ENCODE measurements at regions of chr9 and their contacts with region 1.

Region 1: DNA sequence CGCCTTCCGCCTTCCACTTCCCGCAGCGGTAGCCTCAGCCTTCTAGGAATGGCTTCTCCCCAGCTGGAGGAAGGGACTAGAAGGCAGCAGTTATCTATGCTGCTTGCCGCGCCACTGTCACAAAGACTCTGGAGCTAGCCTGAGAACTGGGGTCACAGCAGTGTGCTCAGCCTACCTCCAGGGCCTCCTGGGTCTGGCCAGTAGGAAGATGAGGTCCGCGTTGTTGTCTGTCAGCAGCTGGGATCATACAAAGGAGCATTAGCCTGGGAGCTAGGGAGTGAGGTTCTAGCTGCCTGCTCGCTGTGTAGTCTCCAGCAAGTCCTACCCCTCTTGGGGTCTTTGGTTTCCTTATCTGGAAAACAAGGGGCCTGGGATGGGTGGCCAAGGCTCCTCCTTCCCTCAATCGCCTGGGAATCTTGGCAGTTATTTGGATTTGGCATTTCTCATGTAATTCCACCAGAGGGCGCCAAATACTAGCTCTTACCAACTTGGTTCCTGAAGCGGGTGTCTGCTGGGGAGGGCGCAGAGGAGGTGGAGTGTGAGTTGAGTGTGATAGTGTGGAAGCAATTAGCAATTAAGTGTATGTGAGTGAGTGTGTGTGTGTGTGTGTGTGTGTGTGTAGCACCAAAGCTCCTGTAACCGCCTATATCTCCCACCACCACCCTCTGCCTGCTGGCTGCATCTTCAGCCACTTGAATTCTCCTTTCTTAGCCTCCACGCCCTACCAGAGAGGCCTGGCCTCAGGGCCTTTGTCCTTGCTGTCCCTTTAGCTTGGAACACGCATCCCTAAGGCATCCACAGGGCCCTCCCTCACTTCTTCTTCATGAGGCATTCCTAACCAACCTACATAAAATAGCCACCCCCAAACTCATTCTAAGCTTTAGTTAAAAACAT is 97.1 kb downstream of the ENTREP1 start:
- DNase-seq: peak; percentile 55
- H3K4me3 ChIP-seq: no peak overlapping the region
- H3K27ac ChIP-seq: no peak overlapping the region
- H3K4me1 ChIP-seq: no peaks in the 10 kb centered on the region
- H3K27me3 ChIP-seq: no peaks in the 10 kb centered on the region
- CTCF ChIP-seq: peak; percentile 76 to 86 (median 79)
- EP300 ChIP-seq: no peak
- POLR2A ChIP-seq: no peak

Region 2: GRCh38 chr9:69324549-69325401 is 97.4 kb before region 1 on chr9 and contains the start of gene ENTREP1:
- in situ Hi-C with region 1: no loop called
- intact Hi-C with region 1: no loop called
- DNase-seq: peak; percentile 75
- H3K4me3 ChIP-seq: peak within 1 kb of the TSS; percentile 44 to 62 (median 52)
- H3K27ac ChIP-seq: peak within 1 kb of the TSS; percentile 44 to 68 (median 66)
- H3K4me1 ChIP-seq: peaks cover 0 to 20% (median 10%) of the 10 kb centered on the region in 4 donors
- H3K27me3 ChIP-seq: peaks cover 71% of the 10 kb centered on the region
- CTCF ChIP-seq: peak in 3 of 5 experiments; percentile 15 to 41 (median 21)
- EP300 ChIP-seq: peak; percentile 61
- POLR2A ChIP-seq: peak; percentile 49
- total RNA-seq, gene ENTREP1: 2.2 to 23.2 (median 9.0) TPM

Region 3: DNA sequence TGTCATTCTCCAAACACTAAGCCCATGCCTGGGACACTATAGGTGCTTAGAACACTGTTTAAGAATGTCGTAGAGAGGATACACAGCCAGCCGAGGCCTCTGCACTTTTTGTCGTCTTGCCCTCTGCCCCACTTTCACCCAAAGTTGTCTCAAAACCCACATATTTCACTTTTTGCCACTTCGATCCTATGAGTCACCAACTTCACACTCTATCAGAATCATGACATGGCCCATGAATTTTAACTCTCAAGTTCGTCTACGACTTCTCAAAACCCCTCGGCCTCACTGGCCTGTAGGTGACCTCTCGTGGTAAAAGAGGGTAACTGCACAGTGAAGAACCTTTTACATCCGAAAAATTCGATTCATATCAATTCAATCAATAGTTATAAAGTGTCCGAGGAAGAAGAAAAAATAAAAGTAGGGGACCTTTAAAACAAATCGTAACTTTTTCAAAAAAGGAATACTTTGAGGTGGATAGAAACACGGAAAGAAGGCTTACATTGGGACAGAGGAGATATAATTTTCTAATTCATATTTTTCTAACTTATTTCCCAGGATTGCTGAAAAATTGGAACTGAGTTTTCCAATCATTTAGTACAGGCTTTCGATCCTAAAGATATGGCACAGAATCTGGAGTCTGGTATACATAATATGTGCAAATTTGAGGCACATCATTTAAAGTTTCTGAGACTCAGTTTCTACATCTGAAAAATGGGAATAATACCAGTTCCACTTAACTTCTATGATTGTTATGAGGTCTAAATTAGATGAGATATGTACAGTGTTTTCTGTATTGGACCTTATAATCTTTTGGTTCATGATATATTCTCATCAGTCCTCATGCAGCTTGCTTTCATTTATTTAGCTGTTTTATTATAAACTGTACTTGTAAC is 127.4 kb after region 1 on chr9:
- in situ Hi-C with region 1: loop called (anchors 5 to 10 kb)
- intact Hi-C with region 1: loop called (anchors 10 kb)
- DNase-seq: no peak
- H3K4me3 ChIP-seq: no peak overlapping the region
- H3K27ac ChIP-seq: no peak overlapping the region
- H3K4me1 ChIP-seq: peaks cover 0 to 3% (median 0%) of the 10 kb centered on the region in 4 donors
- H3K27me3 ChIP-seq: no peaks in the 10 kb centered on the region
- CTCF ChIP-seq: peak; percentile 83 to 86 (median 86)
- EP300 ChIP-seq: no peak
- POLR2A ChIP-seq: no peak

Region 4: DNA sequence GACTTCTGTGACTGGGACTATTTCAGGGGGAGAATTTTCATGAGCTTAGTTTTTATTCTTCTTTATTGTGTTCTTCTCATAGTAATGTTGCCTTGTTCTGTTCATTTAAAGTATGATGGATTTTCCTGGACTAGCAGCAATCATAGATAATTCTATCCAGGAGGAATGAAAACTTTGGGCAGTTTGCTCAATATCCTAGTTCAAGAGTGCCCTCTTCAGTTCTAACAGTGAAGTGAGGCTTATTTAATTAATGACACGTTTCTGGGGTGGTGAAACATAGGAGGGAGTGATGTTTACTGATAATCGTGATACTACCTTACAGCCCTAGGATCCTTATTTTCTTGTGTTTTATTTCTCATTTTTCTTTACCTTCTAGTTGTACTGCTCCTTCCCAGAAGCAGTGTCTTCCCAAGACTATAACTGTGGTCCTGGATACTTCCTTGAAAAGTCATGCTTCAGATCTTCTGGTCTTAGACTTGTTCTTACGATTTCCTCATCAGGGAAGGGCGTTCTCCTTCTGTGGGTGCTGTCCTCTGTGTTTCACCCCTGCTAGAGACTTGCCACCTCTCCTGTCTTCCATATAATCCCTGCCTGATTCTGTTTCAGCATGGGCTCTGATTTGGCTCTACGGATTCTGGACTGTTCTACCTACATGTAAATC is 455.8 kb after region 1 on chr9:
- in situ Hi-C with region 1: loop called in 2 of 4 experiments (anchors 10 to 25 kb)
- intact Hi-C with region 1: no loop called
- DNase-seq: no peak
- H3K4me3 ChIP-seq: no peak overlapping the region
- H3K27ac ChIP-seq: no peak overlapping the region
- H3K4me1 ChIP-seq: no peaks in the 10 kb centered on the region
- H3K27me3 ChIP-seq: no peaks in the 10 kb centered on the region
- CTCF ChIP-seq: peak; percentile 53 to 67 (median 54)
- EP300 ChIP-seq: no peak
- POLR2A ChIP-seq: no peak

Region 5: DNA sequence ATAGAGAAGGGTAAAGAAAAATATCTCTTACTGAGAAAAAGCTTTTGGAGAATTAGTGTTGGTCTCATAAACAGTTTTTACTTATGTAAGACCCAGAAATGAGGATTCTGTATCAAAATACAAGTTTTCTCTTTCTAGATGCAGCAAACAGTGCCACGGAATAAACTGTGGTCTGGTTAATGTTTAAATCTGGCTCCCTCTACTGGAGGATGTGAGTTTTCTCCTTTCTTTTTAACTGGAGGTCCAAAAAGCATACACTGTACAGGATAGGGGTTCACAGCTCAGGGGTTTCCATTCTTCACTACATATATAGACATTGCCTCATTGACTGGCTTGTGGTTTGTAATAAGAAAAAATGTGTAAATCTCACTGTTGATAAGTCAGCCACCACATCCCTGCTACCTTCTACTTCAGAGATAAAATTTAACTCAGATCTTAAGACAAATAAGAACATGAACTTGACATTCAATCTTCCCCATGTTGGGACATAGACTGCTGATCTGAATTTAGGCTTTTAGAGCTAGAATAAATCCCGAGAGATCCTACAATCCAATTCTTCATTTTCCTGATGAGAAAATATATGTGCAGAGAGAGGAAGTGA is 497.4 kb after region 1 on chr9:
- in situ Hi-C with region 1: loop called in 1 of 4 experiments (anchors 25 kb)
- intact Hi-C with region 1: no loop called
- DNase-seq: no peak
- H3K4me3 ChIP-seq: no peak overlapping the region
- H3K27ac ChIP-seq: no peak overlapping the region
- H3K4me1 ChIP-seq: no peaks in the 10 kb centered on the region
- H3K27me3 ChIP-seq: peaks cover 12% of the 10 kb centered on the region
- CTCF ChIP-seq: peak; percentile 51 to 68 (median 66)
- EP300 ChIP-seq: no peak
- POLR2A ChIP-seq: no peak

Region 6: DNA sequence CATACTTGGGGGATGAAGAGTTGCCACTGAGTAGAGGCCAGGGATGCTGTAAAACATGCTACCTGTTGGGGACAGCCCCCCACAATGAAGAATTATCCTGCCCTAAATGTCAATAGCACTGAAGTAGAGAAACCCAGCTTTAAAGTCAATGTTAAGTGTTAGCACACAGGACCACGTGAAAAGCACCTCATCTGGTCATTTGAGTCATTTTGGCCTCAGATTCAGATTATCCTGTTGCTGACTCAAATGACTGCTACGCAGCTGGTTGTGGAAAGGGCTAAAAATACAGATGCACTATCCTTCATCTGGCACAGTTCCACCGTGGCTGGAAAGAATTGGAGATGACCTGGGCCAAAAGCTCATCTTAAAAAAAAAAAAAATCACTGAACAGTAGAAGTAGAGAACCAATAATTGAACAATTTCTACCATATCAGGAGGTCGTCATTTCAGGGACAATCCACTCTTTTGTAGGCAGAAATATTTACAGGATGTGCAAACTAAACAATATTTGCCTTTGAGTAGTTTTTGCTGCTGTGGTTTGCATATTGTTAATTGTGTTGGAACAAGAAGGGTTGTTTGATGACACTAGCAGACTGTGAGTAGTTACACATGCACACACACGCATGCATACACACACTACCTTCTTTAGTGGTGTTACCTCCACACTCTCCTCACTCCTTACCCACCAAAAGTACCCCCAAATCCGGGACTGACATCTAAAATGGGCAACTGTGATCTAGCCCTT is 1187.6 kb after region 1 on chr9:
- in situ Hi-C with region 1: no loop called
- intact Hi-C with region 1: loop called (anchors 10 kb)
- DNase-seq: peak; percentile 21
- H3K4me3 ChIP-seq: no peak overlapping the region
- H3K27ac ChIP-seq: no peak overlapping the region
- H3K4me1 ChIP-seq: peaks cover 0 to 4% (median 0%) of the 10 kb centered on the region in 4 donors
- H3K27me3 ChIP-seq: no peaks in the 10 kb centered on the region
- CTCF ChIP-seq: no peak
- EP300 ChIP-seq: no peak
- POLR2A ChIP-seq: no peak

Measured in transverse colon (tissue), 4 donors.